ENCODE measurements at regions of chr11 and their contacts with region 1.

Region 1: GRCh38 chr11:93225662-93226061 is 27.9 kb upstream of the SLC36A4 start:
- DNase-seq: peak; percentile 41
- ATAC-seq: no peak
- H3K4me3 ChIP-seq: no peak overlapping the region
- H3K4me3 Mint-ChIP-seq: no peak overlapping the region
- H3K27ac ChIP-seq: no peak overlapping the region
- H3K27ac Mint-ChIP-seq: no peak overlapping the region
- H3K4me1 ChIP-seq: no peaks in the 10 kb centered on the region
- H3K4me1 Mint-ChIP-seq: no peaks in the 10 kb centered on the region
- H3K27me3 ChIP-seq: peaks cover 0 to 3% (median 0%) of the 10 kb centered on the region in 4 experiments
- H3K27me3 Mint-ChIP-seq: peaks cover 3% of the 10 kb centered on the region
- CTCF ChIP-seq: peak; percentile 62

Region 2: GRCh38 chr11:92941676-92942571 is 283.7 kb before region 1 on chr11:
- CTCF ChIA-PET with region 1: interaction called, 27 read pairs
- POLR2A ChIA-PET with region 1: no interaction called
- intact Hi-C with region 1: no loop called
- DNase-seq: peak; percentile 29
- ATAC-seq: no peak
- H3K4me3 ChIP-seq: no peak overlapping the region
- H3K4me3 Mint-ChIP-seq: no peak overlapping the region
- H3K27ac ChIP-seq: no peak overlapping the region
- H3K27ac Mint-ChIP-seq: no peak overlapping the region
- H3K4me1 ChIP-seq: no peaks in the 10 kb centered on the region
- H3K4me1 Mint-ChIP-seq: no peaks in the 10 kb centered on the region
- H3K27me3 ChIP-seq: no peaks in the 10 kb centered on the region
- H3K27me3 Mint-ChIP-seq: peaks cover 3% of the 10 kb centered on the region
- CTCF ChIP-seq: peak; percentile 62

Measured in B cell (primary cell).